ENCODE measurements at regions of chr5 and their contacts with region 1.

Region 1: DNA sequence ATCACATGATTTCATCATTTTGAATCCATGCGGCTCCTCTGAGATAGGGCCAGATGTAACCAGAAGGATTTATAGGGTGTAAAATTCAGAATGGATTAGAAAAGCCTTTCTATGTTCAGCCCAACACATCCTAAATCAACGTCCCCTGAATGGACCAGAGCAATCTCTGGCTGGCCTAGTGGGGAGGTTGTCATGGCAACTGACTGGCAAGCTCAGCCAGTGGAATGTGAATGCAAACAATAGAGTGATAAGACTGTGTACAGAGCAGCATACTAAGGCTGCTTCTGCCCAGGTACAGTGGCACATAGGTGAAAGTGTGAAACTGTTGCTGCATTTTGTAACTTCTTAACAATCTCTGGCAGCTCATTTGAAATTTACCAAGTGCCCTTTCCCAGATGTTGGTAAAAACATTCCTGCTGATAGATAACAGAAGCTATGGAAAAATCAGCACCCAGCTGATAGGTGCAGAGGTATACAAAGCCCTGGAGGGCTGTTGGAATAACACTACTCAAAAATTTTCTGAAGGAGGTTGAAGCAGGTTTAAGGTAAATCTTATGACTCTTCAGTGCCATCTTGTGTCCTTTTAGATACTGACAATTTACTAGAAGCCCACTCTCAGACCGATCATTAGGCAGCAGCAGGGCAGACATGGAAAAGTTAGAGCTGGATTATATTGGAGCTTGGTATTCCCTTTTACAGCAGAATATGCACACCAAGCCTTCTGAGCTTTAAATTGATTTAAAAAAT is 267.2 kb downstream of the RAB3C start:
- DNase-seq: no peak
- ATAC-seq: no peak
- H3K4me3 ChIP-seq: no peak overlapping the region
- H3K27ac ChIP-seq: no peak overlapping the region
- H3K4me1 ChIP-seq: no peaks in the 10 kb centered on the region
- H3K27me3 ChIP-seq: no peaks in the 10 kb centered on the region
- CTCF ChIP-seq: peak in 2 of 5 experiments; percentile 19 to 41
- POLR2A ChIP-seq: no peak

Region 2: DNA sequence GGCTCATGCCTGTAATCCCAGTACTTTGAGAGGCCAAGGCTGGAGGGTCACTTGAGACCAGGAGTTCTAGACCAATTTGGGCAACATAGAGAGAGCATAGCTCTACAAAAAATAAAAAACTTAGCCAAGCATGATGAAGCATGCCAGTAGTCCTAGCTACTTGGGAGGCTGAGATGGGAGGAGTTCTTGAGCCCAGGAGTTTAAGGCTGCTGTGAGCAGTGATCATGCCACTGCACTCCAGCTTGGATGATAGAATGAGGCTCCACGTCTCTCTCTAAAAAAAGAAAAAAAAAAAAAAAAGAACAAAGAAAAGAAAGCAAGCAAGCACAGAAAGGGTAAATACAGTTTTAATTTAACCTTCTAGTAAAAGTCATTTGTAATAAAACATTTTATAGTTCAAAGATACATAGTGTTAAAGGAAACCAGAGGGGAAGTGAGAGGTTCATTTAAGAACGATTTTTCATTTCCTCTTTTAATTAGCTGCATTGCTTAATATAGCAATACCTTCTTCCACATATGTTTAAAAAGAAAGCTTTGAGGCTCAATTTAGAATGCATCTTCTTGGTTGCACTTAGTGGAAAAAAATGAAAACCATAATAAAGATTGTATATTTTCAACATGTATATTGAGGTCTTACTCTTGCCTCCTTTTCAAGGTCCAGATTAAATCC is 344.0 kb before region 1 on chr5:
- in situ Hi-C with region 1: loop called in 2 of 4 experiments (anchors 25 kb)
- intact Hi-C with region 1: no loop called
- DNase-seq: no peak
- ATAC-seq: no peak
- H3K4me3 ChIP-seq: no peak overlapping the region
- H3K27ac ChIP-seq: no peak overlapping the region
- H3K4me1 ChIP-seq: no peaks in the 10 kb centered on the region
- H3K27me3 ChIP-seq: no peaks in the 10 kb centered on the region
- CTCF ChIP-seq: no peak
- POLR2A ChIP-seq: no peak

Region 3: GRCh38 chr5:59685793-59686192 is 835.7 kb after region 1 on chr5:
- in situ Hi-C with region 1: loop called in 2 of 4 experiments (anchors 25 kb)
- intact Hi-C with region 1: no loop called
- DNase-seq: no peak
- ATAC-seq: peak; percentile 41 to 69
- H3K4me3 ChIP-seq: no peak overlapping the region
- H3K27ac ChIP-seq: no peak overlapping the region
- H3K4me1 ChIP-seq: peaks cover 12 to 14% of the 10 kb centered on the region in 2 donors
- H3K27me3 ChIP-seq: no peaks in the 10 kb centered on the region
- CTCF ChIP-seq: no peak
- POLR2A ChIP-seq: no peak